HEK293T (cell line): ENCODE measurements at regions of chr22 and their contacts with region 1.

Region 1: DNA sequence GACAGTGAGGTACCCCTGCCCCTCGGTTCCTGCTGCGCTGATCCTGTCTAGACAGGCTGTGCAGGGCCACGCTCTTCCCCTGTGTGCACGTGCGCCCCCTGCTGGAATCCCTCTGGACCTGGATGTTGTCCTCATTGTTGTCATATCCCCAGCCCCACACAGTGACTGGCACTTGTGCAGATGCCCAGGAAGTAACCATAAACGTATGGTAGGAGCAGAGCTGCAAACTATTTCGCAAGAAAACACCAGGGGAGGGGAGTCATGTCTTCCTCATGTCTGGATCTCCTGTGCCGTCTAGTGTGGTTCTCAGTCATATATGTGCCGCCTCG is 114.7 kb downstream of the CRYBB2 start:
- DNase-seq: peak; percentile 73

Region 2: DNA sequence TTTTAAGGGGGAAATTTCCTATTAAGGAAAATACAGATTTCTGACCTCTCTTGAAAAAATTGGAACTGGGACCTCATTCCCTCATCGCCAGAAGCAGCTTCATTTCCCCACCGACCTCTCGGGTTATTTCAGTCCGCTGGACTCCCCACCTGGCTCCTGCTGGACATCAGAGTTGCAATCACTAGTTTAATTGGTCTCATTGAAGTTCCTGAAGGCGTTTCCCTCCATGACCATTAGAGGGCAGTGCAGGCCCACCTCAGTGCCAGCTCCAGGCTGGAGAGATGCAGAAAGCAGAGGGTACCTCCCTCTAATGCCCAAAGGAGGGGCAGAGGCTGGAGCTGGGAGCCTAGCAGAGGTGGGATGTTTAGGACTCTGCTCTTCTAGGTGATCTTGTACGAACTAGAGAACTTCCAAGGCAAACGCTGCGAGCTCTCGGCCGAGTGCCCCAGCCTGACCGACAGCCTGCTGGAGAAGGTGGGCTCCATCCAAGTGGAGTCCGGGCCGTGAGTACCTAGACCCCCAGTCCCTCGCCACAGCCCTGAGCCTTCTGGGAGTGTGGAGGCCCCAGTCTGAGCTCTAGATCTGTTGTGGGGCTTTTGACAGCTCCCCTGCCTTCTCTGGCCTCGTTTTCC is 131.7 kb before region 1 on chr22:
- CTCF ChIA-PET with region 1: interaction called, 14 read pairs
- POLR2A ChIA-PET with region 1: no interaction called
- DNase-seq: peak; percentile 86

Region 3: GRCh38 chr22:25235547-25236290 is 98.4 kb before region 1 on chr22:
- CTCF ChIA-PET with region 1: interaction called, 12 read pairs
- POLR2A ChIA-PET with region 1: no interaction called
- DNase-seq: peak; percentile 100

Region 4: GRCh38 chr22:25509374-25509791 is 175.3 kb after region 1 on chr22:
- CTCF ChIA-PET with region 1: no interaction called
- POLR2A ChIA-PET with region 1: no interaction called
- DNase-seq: no peak